HCT116 (cell line): ENCODE measurements at regions of chr4 and their contacts with region 1.

Region 1: DNA sequence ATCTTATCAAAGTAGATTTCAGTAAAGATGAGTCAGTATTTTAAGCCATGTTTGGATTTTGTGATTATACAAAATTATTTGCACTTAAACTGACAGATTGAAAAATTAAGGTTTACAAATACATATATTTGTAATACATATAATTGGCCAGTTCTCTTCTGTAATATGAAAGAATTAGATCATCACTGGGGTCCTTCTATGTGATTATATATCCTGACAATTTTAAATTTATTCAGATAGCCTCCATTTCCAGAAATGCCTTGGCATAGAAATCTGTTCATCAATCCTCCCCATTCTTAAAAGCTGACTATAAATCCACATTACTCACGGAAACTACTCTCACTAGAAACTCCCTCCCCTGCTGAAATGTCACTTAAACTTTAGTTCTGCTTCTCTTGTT is 280.4 kb upstream of the ANXA10 start:
- DNase-seq: no peak
- ATAC-seq: no peak
- H3K4me3 ChIP-seq: no peak overlapping the region
- H3K27ac ChIP-seq: no peak overlapping the region
- H3K4me1 ChIP-seq: no peaks in the 10 kb centered on the region
- H3K27me3 ChIP-seq: no peaks in the 10 kb centered on the region
- CTCF ChIP-seq: no peak
- POLR2A ChIP-seq: no peak
- RAD21 ChIP-seq: no peak

Region 2: GRCh38 chr4:167606551-167606950 is 205.4 kb before region 1 on chr4:
- CTCF ChIA-PET with region 1: no interaction called
- POLR2A ChIA-PET with region 1: no interaction called
- RAD21 ChIA-PET with region 1: no interaction called
- intact Hi-C with region 1: no loop called
- DNase-seq: no peak
- ATAC-seq: no peak
- H3K4me3 ChIP-seq: no peak overlapping the region
- H3K27ac ChIP-seq: no peak overlapping the region
- H3K4me1 ChIP-seq: no peaks in the 10 kb centered on the region
- H3K27me3 ChIP-seq: no peaks in the 10 kb centered on the region
- CTCF ChIP-seq: no peak
- POLR2A ChIP-seq: no peak
- RAD21 ChIP-seq: no peak

Region 3: GRCh38 chr4:167838686-167839085 is 26.7 kb after region 1 on chr4:
- CTCF ChIA-PET with region 1: no interaction called
- POLR2A ChIA-PET with region 1: no interaction called
- RAD21 ChIA-PET with region 1: no interaction called
- intact Hi-C with region 1: loop called (anchors 2 kb)
- DNase-seq: no peak
- ATAC-seq: no peak
- H3K4me3 ChIP-seq: no peak overlapping the region
- H3K27ac ChIP-seq: no peak overlapping the region
- H3K4me1 ChIP-seq: no peaks in the 10 kb centered on the region
- H3K27me3 ChIP-seq: no peaks in the 10 kb centered on the region
- CTCF ChIP-seq: no peak
- POLR2A ChIP-seq: no peak
- RAD21 ChIP-seq: no peak